HEK293 (cell line): ENCODE measurements at regions of chr1 and their contacts with region 1.

Region 1: DNA sequence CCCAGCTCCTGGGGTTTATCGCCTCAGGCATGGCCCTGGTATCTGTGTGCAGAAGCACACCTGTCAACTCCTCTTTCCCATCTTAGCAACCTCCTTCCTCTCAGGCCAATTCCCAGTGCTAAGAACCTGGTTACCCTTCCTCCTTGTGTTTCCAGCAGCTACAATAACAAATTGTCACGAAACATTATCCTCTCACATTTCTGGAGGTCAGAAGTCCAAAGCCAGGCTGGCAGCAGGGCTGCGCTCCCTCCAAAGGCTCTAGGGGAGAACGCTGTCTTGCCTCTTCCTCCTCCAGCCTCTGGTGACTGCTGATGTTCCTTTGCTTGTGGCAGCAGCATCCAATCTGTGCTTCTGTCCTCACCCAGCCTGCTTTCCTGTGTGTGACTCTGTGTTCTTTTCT is 10.7 kb upstream of the MRPS14 start:
- H3K4me3 ChIP-seq: no peak overlapping the region
- H3K27ac ChIP-seq: no peak overlapping the region
- H3K4me1 ChIP-seq: no peaks in the 10 kb centered on the region
- CTCF ChIP-seq: no peak

Region 2: GRCh38 chr1:174912264-174912663 is 121.7 kb before region 1 on chr1:
- CTCF ChIA-PET with region 1: no interaction called
- POLR2A ChIA-PET with region 1: no interaction called
- H3K4me3 ChIP-seq: no peak overlapping the region
- H3K27ac ChIP-seq: no peak overlapping the region
- H3K4me1 ChIP-seq: peaks cover 4% of the 10 kb centered on the region; the same call in 1 of the 2 replicates
- CTCF ChIP-seq: no peak

Region 3: GRCh38 chr1:175124861-175125260 is 90.9 kb after region 1 on chr1:
- CTCF ChIA-PET with region 1: interaction called, 30 read pairs
- POLR2A ChIA-PET with region 1: interaction called, 3 read pairs
- H3K4me3 ChIP-seq: no peak overlapping the region
- H3K27ac ChIP-seq: no peak overlapping the region
- H3K4me1 ChIP-seq: no peaks in the 10 kb centered on the region
- CTCF ChIP-seq: no peak